ENCODE measurements at regions of chr1 and their contacts with region 1.

Region 1: GRCh38 chr1:113811888-113812660 is at the start of gene RSBN1:
- DNase-seq: peak; percentile 99
- ATAC-seq: peak; percentile 97
- H3K4me3 Mint-ChIP-seq: peak within 1 kb of the TSS; percentile 97
- H3K27ac Mint-ChIP-seq: peak within 1 kb of the TSS; percentile 97
- H3K4me1 Mint-ChIP-seq: peaks cover 33% of the 10 kb centered on the region
- H3K27me3 Mint-ChIP-seq: no peaks in the 10 kb centered on the region
- total RNA-seq, gene RSBN1: 22.1 to 24.3 TPM

Region 2: DNA sequence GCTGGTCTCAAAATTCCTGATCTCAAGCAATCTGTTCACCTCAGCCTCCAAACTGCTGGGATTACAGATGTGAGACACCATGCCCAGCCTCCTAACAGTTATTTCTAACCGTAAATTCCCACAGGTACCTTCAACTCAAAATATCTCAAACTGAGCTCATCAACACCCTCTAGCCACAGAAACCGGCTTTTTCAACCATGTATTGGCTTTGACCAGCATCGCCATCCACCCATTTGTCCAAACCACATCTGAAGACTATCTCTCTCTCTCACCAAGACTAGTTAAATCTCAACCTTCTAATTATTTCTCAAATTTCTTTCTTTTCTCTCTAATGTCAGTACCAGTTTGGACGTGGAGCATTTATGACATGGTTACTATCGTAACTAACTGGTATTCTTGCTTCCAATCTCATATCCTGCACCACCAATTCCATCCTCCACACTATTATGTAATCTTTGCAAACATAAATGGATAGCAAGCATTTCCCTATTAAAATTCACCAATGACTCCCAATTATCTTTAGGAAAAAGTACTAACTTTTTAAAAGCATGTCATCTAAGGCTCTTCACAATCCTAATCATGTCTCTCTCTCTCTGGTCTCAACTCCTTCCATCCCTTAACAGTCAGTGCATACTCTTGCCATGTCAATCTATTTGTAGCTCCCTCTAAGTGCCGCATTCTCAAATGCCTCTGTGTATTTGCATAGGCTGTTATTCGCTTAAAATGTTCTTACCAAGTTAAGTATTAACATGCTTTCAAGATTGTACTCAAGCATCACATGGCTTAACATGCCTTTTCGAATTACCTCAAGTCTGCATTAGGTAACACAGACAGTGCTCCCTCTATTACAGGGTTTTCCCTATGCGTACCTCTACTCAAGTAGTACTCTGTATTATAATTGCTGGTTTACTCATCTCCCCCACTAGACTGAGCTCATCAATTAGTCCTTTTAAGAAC is 17.9 kb before region 1 on chr1:
- CTCF ChIA-PET with region 1: no interaction called
- POLR2A ChIA-PET with region 1: no interaction called
- intact Hi-C with region 1: no loop called
- DNase-seq: no peak
- ATAC-seq: no peak
- H3K4me3 Mint-ChIP-seq: no peak overlapping the region
- H3K27ac Mint-ChIP-seq: no peak overlapping the region
- H3K4me1 Mint-ChIP-seq: peaks cover 63% of the 10 kb centered on the region
- H3K27me3 Mint-ChIP-seq: no peaks in the 10 kb centered on the region

Region 3: GRCh38 chr1:113871597-113872113 is 59.6 kb after region 1 on chr1 and contains the start of gene PTPN22:
- CTCF ChIA-PET with region 1: no interaction called
- POLR2A ChIA-PET with region 1: interaction called, 3 read pairs
- intact Hi-C with region 1: loop called (anchors 1 to 5 kb)
- DNase-seq: peak; percentile 89
- ATAC-seq: peak; percentile 84
- H3K4me3 Mint-ChIP-seq: peak within 1 kb of the TSS; percentile 84
- H3K27ac Mint-ChIP-seq: peak within 1 kb of the TSS; percentile 99
- H3K4me1 Mint-ChIP-seq: peaks cover 72% of the 10 kb centered on the region
- H3K27me3 Mint-ChIP-seq: no peaks in the 10 kb centered on the region
- total RNA-seq, gene PTPN22: 42.4 to 52.6 TPM

Region 4: DNA sequence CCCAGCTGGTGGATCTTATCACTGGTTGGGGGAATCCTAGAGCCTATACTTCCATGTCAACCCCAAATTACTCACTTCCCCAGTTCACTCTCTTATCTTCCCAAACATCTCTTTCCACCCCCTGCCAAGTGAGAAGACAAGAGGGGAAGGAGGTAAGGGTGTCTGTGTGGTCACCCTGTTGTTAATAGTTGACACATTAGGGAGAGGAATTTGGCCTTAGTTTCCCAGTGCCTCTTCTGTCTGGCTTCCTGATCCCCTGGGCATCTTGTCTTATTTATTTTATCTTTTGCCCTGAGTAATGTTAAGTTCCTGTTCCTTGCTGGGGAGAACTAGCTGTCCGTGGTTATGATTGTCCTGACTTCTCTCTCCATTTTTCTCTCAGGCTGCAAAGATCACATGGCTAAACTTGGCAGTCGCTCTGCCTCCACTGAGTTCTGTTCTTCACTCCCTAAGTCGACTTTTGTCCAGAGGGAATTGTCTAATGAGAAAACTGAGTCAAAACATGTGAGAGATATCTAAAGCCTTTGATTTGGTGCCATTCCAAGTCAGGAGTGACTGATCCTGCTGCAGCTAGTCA is 498.7 kb after region 1 on chr1:
- CTCF ChIA-PET with region 1: no interaction called
- POLR2A ChIA-PET with region 1: no interaction called
- intact Hi-C with region 1: no loop called
- DNase-seq: no peak
- ATAC-seq: no peak
- H3K4me3 Mint-ChIP-seq: no peak overlapping the region
- H3K27ac Mint-ChIP-seq: no peak overlapping the region
- H3K4me1 Mint-ChIP-seq: no peaks in the 10 kb centered on the region
- H3K27me3 Mint-ChIP-seq: peaks cover 1% of the 10 kb centered on the region